ENCODE measurements at regions of chr11 and their contacts with region 1.

Region 1: DNA sequence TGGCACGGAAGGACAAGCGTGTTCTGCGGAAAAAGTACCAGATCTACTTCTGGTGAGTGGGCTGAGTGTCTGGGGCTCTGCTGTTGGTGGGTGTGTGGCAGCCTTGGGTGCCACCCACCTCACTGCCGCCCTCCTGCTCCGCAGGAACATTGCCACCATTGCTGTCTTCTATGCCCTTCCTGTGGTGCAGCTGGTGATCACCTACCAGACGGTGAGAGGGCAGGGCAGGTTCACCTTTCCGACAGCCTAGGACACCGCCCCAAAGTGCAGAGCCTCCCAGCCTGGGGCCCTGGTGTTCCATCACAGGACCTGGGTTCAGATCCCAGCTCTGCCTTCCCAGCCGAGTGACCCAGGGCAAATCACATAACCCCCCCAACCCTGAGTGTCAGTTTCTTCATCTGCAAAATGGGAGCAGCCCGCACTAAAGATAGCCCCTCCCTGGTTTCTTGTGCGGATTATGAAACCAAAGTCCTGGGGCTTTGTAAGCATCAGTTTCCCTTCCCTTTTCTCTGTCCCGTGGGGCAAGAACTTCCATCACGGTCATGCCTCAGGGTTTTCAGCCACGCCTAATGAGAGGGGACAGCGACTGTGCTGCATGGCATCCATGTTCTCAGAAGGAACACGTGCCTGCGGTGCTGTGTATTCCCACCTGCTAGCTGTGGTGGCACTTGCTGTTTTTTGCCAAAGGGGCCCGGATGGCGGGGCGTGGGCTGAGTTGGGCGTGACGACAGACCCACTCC is 9.8 kb upstream of the TAGLN start:
- DNase-seq: peak; percentile 66
- ATAC-seq: peak; percentile 87
- H3K4me3 Mint-ChIP-seq: peak overlapping the region; percentile 74
- H3K27ac Mint-ChIP-seq: peak overlapping the region; percentile 94
- H3K4me1 Mint-ChIP-seq: peaks cover 78% of the 10 kb centered on the region
- H3K27me3 Mint-ChIP-seq: no peaks in the 10 kb centered on the region
- CTCF ChIP-seq: no peak

Region 2: GRCh38 chr11:117143871-117144476 is 45.4 kb before region 1 on chr11 and contains the start of gene PAFAH1B2:
- CTCF ChIA-PET with region 1: no interaction called
- POLR2A ChIA-PET with region 1: interaction called, 37 read pairs
- intact Hi-C with region 1: loop called (anchors 1 kb)
- DNase-seq: peak; percentile 95
- ATAC-seq: peak; percentile 84
- H3K4me3 Mint-ChIP-seq: peak within 1 kb of the TSS; percentile 95
- H3K27ac Mint-ChIP-seq: peak within 1 kb of the TSS; percentile 95
- H3K4me1 Mint-ChIP-seq: peaks cover 40% of the 10 kb centered on the region
- H3K27me3 Mint-ChIP-seq: peaks cover 5% of the 10 kb centered on the region
- CTCF ChIP-seq: no peak
- total RNA-seq, gene PAFAH1B2: 71.3 and 78.7 TPM in 2 replicates

Region 3: GRCh38 chr11:117205211-117205818 is 16.0 kb after region 1 on chr11:
- CTCF ChIA-PET with region 1: interaction called, 3 read pairs
- POLR2A ChIA-PET with region 1: interaction called, 11 read pairs
- intact Hi-C with region 1: loop called (anchors 2 kb)
- DNase-seq: no peak
- ATAC-seq: no peak
- H3K4me3 Mint-ChIP-seq: no peak overlapping the region
- H3K27ac Mint-ChIP-seq: peak overlapping the region; percentile 2
- H3K4me1 Mint-ChIP-seq: peaks cover 16% of the 10 kb centered on the region
- H3K27me3 Mint-ChIP-seq: no peaks in the 10 kb centered on the region
- CTCF ChIP-seq: no peak

Measured in activated B cell treated with CpG ODN at 0.5 μM for 24 hours (primary cell).